ENCODE measurements at regions of chr11 and their contacts with region 1.

Region 1: GRCh38 chr11:63007920-63008319 is 7.7 kb downstream of the SLC22A8 start:
- DNase-seq: no peak
- H3K4me3 Mint-ChIP-seq: no peak overlapping the region
- H3K27ac Mint-ChIP-seq: no peak overlapping the region
- H3K4me1 Mint-ChIP-seq: no peaks in the 10 kb centered on the region
- H3K27me3 Mint-ChIP-seq: no peaks in the 10 kb centered on the region

Region 2: GRCh38 chr11:63023841-63024648 is 16.1 kb after region 1 on chr11:
- CTCF ChIA-PET with region 1: interaction called, 37 read pairs
- intact Hi-C with region 1: no loop called
- DNase-seq: peak; percentile 93
- H3K4me3 Mint-ChIP-seq: no peak overlapping the region
- H3K27ac Mint-ChIP-seq: no peak overlapping the region
- H3K4me1 Mint-ChIP-seq: peaks cover 4% of the 10 kb centered on the region
- H3K27me3 Mint-ChIP-seq: peaks cover 2% of the 10 kb centered on the region

Region 3: DNA sequence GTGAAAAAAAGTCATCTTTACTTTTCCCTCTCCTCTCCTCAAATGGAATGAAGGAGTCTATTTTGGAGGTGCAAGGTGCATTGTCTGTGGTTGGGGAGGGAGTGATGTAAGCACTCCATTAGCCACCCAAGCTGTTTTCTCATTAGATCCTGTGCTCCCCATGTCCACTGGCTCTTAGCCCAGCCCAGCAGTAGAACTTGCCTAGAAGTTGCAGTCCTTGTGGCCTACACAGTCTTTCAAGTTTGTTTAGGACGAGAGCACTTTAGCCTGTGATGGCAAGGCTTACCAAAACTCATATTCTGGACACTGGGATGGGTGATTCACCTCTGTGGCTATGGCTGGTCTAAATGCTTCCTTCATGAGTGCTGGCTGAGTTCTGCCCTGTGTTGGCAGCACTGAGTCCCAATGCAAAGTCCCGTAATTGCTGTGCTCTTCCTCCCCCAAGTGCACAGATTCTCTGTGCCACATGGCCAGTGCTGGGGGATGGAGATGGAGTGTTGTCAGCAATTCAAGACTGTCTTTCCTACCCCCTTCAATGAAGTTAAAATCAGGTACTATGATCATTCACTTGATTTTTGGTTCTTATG is 219.7 kb after region 1 on chr11:
- CTCF ChIA-PET with region 1: no interaction called
- intact Hi-C with region 1: no loop called
- DNase-seq: no peak
- H3K4me3 Mint-ChIP-seq: no peak overlapping the region
- H3K27ac Mint-ChIP-seq: no peak overlapping the region
- H3K4me1 Mint-ChIP-seq: no peaks in the 10 kb centered on the region
- H3K27me3 Mint-ChIP-seq: peaks cover 23% of the 10 kb centered on the region